Ovary (tissue), 10 donors: ENCODE measurements at regions of chr18 and their contacts with region 1.

Region 1: GRCh38 chr18:21600526-21601410 is at the start of gene ESCO1:
- DNase-seq: peak; percentile 94 to 97 (median 95)
- H3K4me3 ChIP-seq: peak within 1 kb of the TSS; percentile 96
- H3K27ac ChIP-seq: peak within 1 kb of the TSS; percentile 36 to 93
- H3K4me1 ChIP-seq: peaks cover 3% of the 10 kb centered on the region
- H3K27me3 ChIP-seq: no peaks in the 10 kb centered on the region
- CTCF ChIP-seq: peak; percentile 96 to 99 (median 98)
- EP300 ChIP-seq: peak; percentile 63
- POLR2A ChIP-seq: peak; percentile 78
- total RNA-seq, gene ESCO1: 10.9 to 21.3 (median 16.9) TPM

Region 2: GRCh38 chr18:21684731-21685130 is 84.0 kb after region 1 on chr18:
- intact Hi-C with region 1: no loop called
- DNase-seq: no peak
- H3K4me3 ChIP-seq: no peak overlapping the region
- H3K27ac ChIP-seq: no peak overlapping the region
- H3K4me1 ChIP-seq: peaks cover 2% of the 10 kb centered on the region
- H3K27me3 ChIP-seq: no peaks in the 10 kb centered on the region
- CTCF ChIP-seq: no peak
- EP300 ChIP-seq: no peak
- POLR2A ChIP-seq: no peak

Region 3: DNA sequence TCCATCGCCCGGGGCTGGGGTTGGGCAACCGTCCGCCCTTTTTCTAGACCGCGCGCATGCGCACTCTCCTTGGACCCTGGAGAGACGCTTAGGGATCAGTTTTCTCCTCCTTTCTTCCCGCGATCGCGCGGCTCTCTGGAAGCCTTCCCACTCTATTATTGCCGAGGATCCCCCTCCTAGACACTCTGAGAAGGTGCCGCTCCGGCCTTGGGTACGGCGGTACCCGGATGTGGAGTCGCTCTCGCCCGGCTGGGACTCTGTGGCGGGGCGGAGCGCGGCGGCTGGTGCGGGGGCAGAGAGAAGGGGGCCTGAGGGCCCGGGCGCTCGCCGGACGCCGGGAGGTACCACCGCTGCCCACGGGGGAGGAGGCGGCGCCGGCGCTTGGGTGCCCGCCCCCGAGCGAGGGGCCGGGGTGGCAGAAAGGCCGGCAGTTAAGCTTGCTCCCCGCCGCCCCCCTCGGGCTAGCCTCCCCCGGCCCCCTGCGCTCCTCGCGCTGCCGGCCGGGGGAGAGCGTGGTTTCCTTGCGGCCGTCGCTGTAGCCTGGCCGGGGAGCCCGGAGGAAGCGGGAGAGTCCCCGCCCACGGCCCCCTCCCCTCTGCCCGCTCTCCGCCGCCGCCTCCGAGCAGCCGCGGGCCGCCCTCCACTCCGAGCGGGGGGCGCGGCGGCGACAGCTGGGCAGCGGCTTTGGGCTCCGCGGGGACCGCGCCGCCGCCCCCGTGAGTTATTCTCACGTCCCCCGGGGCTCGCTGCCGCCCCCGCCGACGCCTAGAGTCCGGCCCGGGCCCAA is 140.1 kb after region 1 on chr18 and contains the start of gene MIB1:
- intact Hi-C with region 1: loop called in 1 of 4 experiments (anchors 5 kb)
- DNase-seq: peak; percentile 99 to 100 (median 99)
- H3K4me3 ChIP-seq: peak within 1 kb of the TSS; percentile 96
- H3K27ac ChIP-seq: peak within 1 kb of the TSS; percentile 90 to 98
- H3K4me1 ChIP-seq: peaks cover 4% of the 10 kb centered on the region
- H3K27me3 ChIP-seq: no peaks in the 10 kb centered on the region
- CTCF ChIP-seq: no peak
- EP300 ChIP-seq: no peak
- POLR2A ChIP-seq: peak; percentile 67
- total RNA-seq, gene MIB1: 30.9 to 54.8 (median 44.9) TPM

Region 4: GRCh38 chr18:21820035-21820810 is 219.5 kb after region 1 on chr18:
- intact Hi-C with region 1: loop called in 1 of 4 experiments (anchors 10 kb)
- DNase-seq: no peak
- H3K4me3 ChIP-seq: no peak overlapping the region
- H3K27ac ChIP-seq: no peak overlapping the region
- H3K4me1 ChIP-seq: no peaks in the 10 kb centered on the region
- H3K27me3 ChIP-seq: no peaks in the 10 kb centered on the region
- CTCF ChIP-seq: no peak
- EP300 ChIP-seq: no peak
- POLR2A ChIP-seq: no peak